ENCODE measurements at regions of chr12 and their contacts with region 1.

Region 1: DNA sequence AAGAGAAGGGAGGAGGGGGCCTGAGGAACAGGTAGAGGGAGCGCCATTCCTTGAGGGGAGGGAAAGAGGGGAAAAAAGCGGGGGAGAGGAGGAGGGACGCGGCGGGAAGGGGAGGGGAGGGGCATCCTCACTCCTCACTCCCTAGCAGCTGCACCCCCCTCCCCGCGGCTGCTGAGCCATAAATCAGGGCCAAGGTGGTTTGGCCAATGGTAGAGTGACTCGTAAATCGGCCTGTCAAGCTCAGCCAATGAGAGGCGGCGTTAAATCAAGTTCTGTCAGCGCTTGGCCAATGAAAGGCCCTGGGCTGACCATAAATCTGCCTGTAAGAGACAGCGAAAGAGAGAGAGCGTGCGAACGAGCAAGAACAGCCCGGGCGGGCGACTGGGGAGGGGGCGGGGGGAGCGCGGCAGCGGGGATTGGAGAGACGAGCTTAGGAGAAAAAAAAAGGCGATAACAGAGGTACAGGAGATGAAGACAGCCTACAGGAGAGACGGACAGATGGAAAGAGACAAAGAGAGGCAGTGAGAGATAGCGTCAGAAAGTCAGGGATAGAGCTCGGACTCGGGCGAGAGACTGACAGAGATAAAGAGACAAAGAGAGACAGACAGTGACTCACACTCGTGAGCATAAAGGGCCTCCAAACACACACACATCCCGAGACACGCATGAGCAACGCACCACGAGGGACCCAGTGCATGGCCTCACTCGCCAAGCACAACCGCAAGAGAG is 5.1 kb downstream of the GPR84 start:
- DNase-seq: peak; percentile 96
- ATAC-seq: peak; percentile 98
- H3K4me3 ChIP-seq: peak overlapping the region; percentile 56 to 92 (median 85)
- H3K4me3 Mint-ChIP-seq: no peak overlapping the region
- H3K27ac ChIP-seq: peak overlapping the region; percentile 40 to 81
- H3K27ac Mint-ChIP-seq: no peak overlapping the region
- H3K4me1 ChIP-seq: peaks cover 15 to 17% of the 10 kb centered on the region in 2 donors
- H3K4me1 Mint-ChIP-seq: peaks cover 10% of the 10 kb centered on the region
- H3K27me3 ChIP-seq: no peaks in the 10 kb centered on the region
- H3K27me3 Mint-ChIP-seq: no peaks in the 10 kb centered on the region
- CTCF ChIP-seq: no peak

Region 2: DNA sequence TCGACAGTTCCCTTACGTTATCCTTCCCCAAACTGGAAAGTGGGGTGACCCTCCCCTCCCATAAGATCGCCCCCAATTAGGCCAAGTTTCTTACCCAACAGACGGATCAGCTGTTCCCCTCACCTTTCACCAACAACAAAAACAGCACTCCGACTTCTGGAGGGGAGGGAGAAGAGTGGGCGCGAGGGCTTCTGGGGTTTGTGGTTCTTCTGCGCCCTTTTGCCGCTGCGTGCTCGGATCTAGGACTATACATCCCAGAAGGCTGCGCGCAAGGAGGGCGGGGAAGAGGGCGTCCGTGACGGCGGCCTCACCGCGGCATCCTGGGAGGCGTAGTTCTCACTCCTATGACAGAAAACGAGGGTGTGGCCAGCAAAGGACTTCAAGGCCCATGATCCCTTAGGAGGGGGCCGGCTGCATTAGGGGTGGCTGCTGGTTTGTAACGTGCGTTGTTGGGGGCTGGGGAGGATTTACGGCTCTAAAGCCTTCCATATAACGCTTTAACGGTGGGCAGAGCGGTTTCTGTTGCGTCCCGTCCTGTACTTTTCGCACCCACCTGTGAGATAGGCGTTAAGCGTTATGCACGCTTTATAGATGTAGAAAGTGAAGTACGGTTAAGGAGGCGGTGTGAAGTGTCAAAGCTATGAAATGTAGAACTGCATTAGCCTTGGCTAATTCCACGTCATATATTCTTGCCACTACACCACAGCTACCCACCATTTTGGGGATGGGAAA is 631.7 kb before region 1 on chr12 and contains the start of gene CALCOCO1:
- CTCF ChIA-PET with region 1: no interaction called
- POLR2A ChIA-PET with region 1: no interaction called
- intact Hi-C with region 1: loop called (anchors 1 kb)
- DNase-seq: peak; percentile 98
- ATAC-seq: peak; percentile 97
- H3K4me3 ChIP-seq: peak within 1 kb of the TSS; percentile 51 to 96 (median 85)
- H3K4me3 Mint-ChIP-seq: peak within 1 kb of the TSS; percentile 91
- H3K27ac ChIP-seq: peak within 1 kb of the TSS; percentile 60 to 61
- H3K27ac Mint-ChIP-seq: peak within 1 kb of the TSS; percentile 82
- H3K4me1 ChIP-seq: peaks cover 13 to 21% of the 10 kb centered on the region in 2 donors
- H3K4me1 Mint-ChIP-seq: peaks cover 22% of the 10 kb centered on the region
- H3K27me3 ChIP-seq: no peaks in the 10 kb centered on the region
- H3K27me3 Mint-ChIP-seq: peaks cover 11% of the 10 kb centered on the region
- CTCF ChIP-seq: no peak
- total RNA-seq, gene CALCOCO1: 171 and 179 TPM in 2 replicates

Region 3: DNA sequence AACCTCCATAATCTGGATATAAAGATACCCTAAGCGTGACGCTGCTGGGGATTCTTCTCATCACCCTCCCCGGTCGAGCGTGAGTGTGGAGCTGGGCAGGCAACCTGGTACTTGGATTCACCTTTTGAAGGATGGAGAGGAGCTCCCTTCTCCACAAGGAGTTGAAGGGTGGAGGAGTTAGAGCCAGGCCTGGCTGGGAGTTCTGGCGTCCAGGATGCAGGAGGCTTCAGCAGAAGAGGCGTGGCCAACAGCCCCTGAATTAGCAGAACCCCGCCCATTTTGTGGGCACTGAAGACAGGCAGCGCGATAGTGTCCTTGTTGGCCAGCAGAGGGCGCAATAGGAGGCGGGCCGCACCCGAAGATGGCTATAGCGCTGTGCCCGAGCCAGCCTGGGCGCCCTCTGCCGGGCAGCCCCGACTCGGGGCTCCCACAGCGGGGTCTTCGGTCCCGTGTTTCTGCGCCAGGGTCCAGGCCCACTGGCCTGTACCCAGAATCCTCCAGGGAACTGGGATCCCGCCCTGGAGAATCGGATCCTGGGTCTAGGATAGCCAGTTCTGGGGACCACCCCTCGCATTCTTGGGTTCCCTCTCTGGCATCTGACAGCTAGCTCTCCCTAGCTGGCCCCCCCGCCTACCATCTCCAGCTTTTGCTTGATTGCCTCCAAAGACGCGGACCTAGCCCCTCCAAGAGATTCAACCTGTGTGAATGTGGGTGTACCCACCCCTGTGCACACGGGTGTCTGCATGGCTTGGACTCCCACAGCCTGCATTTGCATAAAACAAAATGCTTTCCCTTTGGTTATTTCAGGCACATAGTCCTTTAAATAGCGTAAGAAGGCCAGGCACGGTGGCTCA is 144.4 kb before region 1 on chr12:
- CTCF ChIA-PET with region 1: interaction called, 14 read pairs
- POLR2A ChIA-PET with region 1: no interaction called
- intact Hi-C with region 1: loop called (anchors 2 kb)
- DNase-seq: peak; percentile 95
- ATAC-seq: peak; percentile 83
- H3K4me3 ChIP-seq: peak overlapping the region; percentile 3 to 58 (median 46)
- H3K4me3 Mint-ChIP-seq: peak overlapping the region; percentile 90
- H3K27ac ChIP-seq: no peak overlapping the region
- H3K27ac Mint-ChIP-seq: peak overlapping the region; percentile 33
- H3K4me1 ChIP-seq: peaks cover 36 to 46% of the 10 kb centered on the region in 2 donors
- H3K4me1 Mint-ChIP-seq: peaks cover 44% of the 10 kb centered on the region
- H3K27me3 ChIP-seq: peaks cover 0 to 30% (median 6%) of the 10 kb centered on the region in 4 experiments
- H3K27me3 Mint-ChIP-seq: peaks cover 6% of the 10 kb centered on the region
- CTCF ChIP-seq: peak; percentile 100

Region 4: GRCh38 chr12:54294152-54294952 is 64.8 kb before region 1 on chr12:
- CTCF ChIA-PET with region 1: interaction called, 10 read pairs
- POLR2A ChIA-PET with region 1: interaction called, 3 read pairs
- intact Hi-C with region 1: loop called (anchors 2 kb)
- DNase-seq: peak; percentile 59
- ATAC-seq: peak; percentile 74
- H3K4me3 ChIP-seq: no peak overlapping the region
- H3K4me3 Mint-ChIP-seq: no peak overlapping the region
- H3K27ac ChIP-seq: no peak overlapping the region
- H3K27ac Mint-ChIP-seq: no peak overlapping the region
- H3K4me1 ChIP-seq: peaks cover 15 to 18% of the 10 kb centered on the region in 2 donors
- H3K4me1 Mint-ChIP-seq: peaks cover 15% of the 10 kb centered on the region
- H3K27me3 ChIP-seq: peaks cover 0 to 16% (median 6%) of the 10 kb centered on the region in 4 experiments
- H3K27me3 Mint-ChIP-seq: peaks cover 15% of the 10 kb centered on the region
- CTCF ChIP-seq: peak; percentile 48

Region 5: GRCh38 chr12:54379401-54380201 is 20.4 kb after region 1 on chr12:
- CTCF ChIA-PET with region 1: interaction called, 42 read pairs
- POLR2A ChIA-PET with region 1: interaction called, 4 read pairs
- intact Hi-C with region 1: no loop called
- DNase-seq: peak; percentile 88
- ATAC-seq: peak; percentile 90
- H3K4me3 ChIP-seq: peak overlapping the region in 3 of 5 experiments; percentile 11 to 43 (median 40)
- H3K4me3 Mint-ChIP-seq: peak overlapping the region; percentile 77
- H3K27ac ChIP-seq: no peak overlapping the region
- H3K27ac Mint-ChIP-seq: peak overlapping the region; percentile 62
- H3K4me1 ChIP-seq: peaks cover 26 to 45% of the 10 kb centered on the region in 2 donors
- H3K4me1 Mint-ChIP-seq: peaks cover 35% of the 10 kb centered on the region
- H3K27me3 ChIP-seq: no peaks in the 10 kb centered on the region
- H3K27me3 Mint-ChIP-seq: no peaks in the 10 kb centered on the region
- CTCF ChIP-seq: peak; percentile 100

Region 6: DNA sequence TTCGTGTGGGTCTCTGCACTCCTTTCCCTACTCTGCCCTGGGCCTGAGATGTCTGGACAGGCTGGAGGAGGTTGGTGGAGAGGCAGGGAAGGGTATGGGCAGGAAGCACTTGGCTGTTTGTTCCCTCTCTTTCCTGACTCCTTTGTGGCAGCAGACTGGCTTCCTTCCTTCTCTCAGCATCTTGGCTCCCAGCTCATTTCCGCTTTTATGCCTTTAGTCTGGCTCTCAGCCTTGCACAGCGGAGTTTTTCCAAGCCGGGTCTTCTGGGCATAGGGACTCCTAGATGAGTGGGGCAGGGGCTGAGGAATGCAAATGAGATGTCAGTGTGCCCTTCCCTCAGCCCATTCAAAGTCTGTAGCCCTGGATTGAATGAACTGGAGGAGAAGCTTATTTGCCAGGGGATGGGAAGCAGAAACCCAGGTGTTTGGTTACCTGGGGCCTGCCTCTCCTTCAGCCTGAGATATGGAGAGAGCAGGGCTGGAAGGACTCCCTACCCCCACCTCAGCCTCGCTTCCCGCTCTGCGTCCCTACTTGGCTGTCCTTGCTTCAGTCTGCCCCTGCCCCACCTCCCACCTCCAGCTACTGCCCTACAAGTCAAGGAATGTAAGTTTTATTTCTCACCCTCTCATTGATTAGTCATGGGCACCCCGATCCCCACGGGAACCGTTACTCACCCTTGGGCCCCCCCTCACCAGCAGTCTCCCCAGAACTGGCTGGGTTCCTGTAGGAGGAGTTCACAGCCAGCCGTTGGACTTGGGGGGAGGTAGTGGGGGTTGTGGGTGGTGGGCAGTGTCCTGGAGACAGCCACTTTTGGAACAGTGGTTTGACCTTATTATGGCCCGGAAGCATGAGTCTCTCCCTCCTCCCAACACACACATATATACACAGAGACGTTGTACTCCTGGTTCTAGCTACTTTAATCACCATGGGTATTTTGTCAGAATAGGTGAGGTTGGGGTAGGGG is 69.1 kb after region 1 on chr12:
- CTCF ChIA-PET with region 1: no interaction called
- POLR2A ChIA-PET with region 1: no interaction called
- intact Hi-C with region 1: no loop called
- DNase-seq: no peak
- ATAC-seq: no peak
- H3K4me3 ChIP-seq: no peak overlapping the region
- H3K4me3 Mint-ChIP-seq: no peak overlapping the region
- H3K27ac ChIP-seq: no peak overlapping the region
- H3K27ac Mint-ChIP-seq: no peak overlapping the region
- H3K4me1 ChIP-seq: peaks cover 6% of the 10 kb centered on the region in 2 donors
- H3K4me1 Mint-ChIP-seq: peaks cover 16% of the 10 kb centered on the region
- H3K27me3 ChIP-seq: peaks cover 0 to 34% (median 4%) of the 10 kb centered on the region in 4 experiments
- H3K27me3 Mint-ChIP-seq: peaks cover 53% of the 10 kb centered on the region
- CTCF ChIP-seq: no peak

Measured in B cell (primary cell).